ENCODE measurements at regions of chr3 and their contacts with region 1.

Region 1: DNA sequence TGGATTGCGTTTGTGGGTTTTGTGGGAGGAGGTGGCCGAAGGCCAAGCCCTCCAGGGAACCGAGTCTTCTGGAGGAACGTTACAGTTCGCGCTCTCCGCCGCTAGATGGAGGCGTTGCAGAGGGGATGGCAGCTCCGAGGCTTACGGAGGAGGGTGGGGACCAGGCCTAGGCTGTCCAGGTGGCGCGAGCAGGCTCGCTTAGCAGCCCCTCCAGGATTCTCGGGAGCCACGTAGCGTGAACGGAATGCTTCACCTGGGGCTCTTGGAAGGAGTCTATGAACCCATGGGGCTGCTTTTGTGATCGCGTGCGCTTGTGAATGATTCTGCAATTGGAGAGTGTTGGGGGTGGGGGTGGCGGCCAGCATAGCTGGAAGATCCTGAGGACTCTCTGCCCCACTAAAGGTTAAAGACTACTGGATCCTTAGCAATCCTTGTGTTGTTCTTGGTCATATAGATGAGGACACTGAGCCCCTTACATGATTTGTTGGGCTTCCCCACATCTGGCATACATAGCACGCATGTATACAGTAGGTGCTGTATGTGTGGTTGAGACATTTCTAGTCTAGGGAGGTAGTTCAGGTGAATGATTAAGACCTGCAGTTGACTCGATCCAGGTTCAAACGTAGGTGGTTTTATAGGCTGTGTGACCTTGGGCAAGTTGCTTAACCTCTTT is 25.7 kb downstream of the FAM3D start:
- DNase-seq: peak; percentile 83
- H3K4me3 Mint-ChIP-seq: no peak overlapping the region
- H3K27ac Mint-ChIP-seq: no peak overlapping the region
- H3K4me1 Mint-ChIP-seq: peaks cover under 1% of the 10 kb centered on the region
- H3K27me3 Mint-ChIP-seq: no peaks in the 10 kb centered on the region
- CTCF ChIP-seq: peak; percentile 93

Region 2: DNA sequence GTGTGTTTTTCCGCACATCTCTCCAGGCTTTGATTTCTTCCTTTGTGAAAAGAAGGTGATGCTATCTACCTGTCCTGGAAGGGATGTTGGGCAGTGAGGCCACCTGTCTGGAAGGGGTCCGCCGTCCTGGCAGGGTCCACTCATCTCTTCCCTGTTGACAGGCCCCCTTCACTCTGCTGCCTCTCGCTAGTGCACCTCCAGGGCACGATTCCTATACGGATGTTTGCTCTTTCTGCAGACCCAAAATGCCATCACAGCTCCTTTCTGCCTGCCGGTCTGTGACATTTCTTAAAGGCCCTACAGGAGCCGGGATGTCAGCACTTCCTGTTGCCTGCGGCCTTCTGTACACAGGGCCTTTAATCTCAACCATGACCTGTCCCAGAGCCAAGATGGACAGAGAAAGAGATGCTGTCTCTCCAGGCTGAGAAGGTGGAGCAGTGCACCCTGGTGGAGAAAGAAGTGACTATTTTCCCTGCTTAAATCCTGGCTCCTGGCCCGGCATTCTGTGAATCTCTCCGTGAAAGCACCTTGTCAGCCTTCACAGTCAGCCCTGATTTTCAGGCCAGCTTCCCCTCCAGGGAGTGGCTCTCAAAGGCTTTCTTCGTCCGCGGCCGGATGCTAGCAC is 18.3 kb after region 1 on chr3:
- CTCF ChIA-PET with region 1: interaction called, 26 read pairs
- POLR2A ChIA-PET with region 1: no interaction called
- intact Hi-C with region 1: loop called (anchors 2 kb)
- DNase-seq: peak; percentile 56
- H3K4me3 Mint-ChIP-seq: no peak overlapping the region
- H3K27ac Mint-ChIP-seq: no peak overlapping the region
- H3K4me1 Mint-ChIP-seq: no peaks in the 10 kb centered on the region
- H3K27me3 Mint-ChIP-seq: peaks cover 26% of the 10 kb centered on the region
- CTCF ChIP-seq: peak; percentile 31

Region 3: GRCh38 chr3:58670506-58671135 is 29.8 kb after region 1 on chr3:
- CTCF ChIA-PET with region 1: no interaction called
- POLR2A ChIA-PET with region 1: no interaction called
- intact Hi-C with region 1: no loop called
- DNase-seq: no peak
- H3K4me3 Mint-ChIP-seq: no peak overlapping the region
- H3K27ac Mint-ChIP-seq: no peak overlapping the region
- H3K4me1 Mint-ChIP-seq: no peaks in the 10 kb centered on the region
- H3K27me3 Mint-ChIP-seq: peaks cover 35% of the 10 kb centered on the region
- CTCF ChIP-seq: no peak

Region 4: DNA sequence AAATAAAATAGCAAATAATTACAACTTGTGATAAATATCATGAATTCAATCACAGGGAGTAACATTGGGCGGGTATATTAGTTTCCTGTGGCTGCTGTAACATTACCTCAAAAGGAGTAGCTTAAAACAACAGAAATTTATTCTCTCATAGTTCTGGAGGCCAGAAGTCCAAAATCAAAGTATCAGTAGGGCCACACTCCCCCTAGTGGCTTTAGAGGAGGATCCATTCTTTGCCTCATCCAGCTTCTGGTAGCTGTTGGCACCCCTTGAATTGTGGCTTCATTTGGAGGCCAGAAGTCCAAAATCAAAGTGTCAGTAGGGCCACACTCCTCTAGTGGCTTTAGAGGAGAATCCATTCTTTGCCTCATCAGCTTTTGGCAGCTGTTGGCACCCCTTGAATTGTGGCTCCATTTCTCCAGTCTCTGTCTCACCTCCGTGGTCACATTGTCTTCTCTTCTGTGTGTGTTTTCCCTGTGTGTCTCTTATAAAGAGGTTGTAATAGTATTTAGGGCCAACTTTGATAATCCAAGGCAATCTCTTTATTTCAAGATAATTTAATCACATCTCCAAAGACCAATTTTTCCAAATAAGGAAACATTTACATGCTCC is 412.1 kb after region 1 on chr3:
- CTCF ChIA-PET with region 1: interaction called, 64 read pairs
- POLR2A ChIA-PET with region 1: no interaction called
- intact Hi-C with region 1: loop called (anchors 1 kb)
- DNase-seq: peak; percentile 70
- H3K4me3 Mint-ChIP-seq: no peak overlapping the region
- H3K27ac Mint-ChIP-seq: no peak overlapping the region
- H3K4me1 Mint-ChIP-seq: no peaks in the 10 kb centered on the region
- H3K27me3 Mint-ChIP-seq: no peaks in the 10 kb centered on the region
- CTCF ChIP-seq: peak; percentile 60

Measured in MCF 10A (cell line).